A673 (cell line): ENCODE measurements at regions of chr19 and their contacts with region 1.

Region 1: DNA sequence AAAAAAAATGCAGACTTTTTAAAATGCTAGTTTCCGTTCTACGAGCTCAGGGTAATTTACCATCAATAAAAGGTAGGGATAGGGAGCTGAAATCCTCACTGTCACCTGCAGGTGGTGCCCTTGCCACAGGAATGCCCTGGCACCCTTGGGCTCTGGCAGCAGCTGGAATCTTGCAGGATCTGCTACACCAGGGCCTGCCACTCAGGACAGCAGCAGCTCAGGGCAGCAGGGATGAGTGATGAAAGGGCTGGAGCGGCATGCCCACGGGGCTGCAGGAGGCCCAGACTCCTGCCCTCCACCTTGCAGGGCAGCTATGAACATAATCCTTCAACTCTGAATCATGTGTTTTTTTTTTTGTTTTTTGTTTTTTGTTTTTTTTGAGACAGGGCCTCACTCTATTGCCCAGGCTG is 54.0 kb downstream of the GNG7 start:
- DNase-seq: peak; percentile 85
- H3K4me3 ChIP-seq: no peak overlapping the region
- H3K27ac ChIP-seq: no peak overlapping the region
- H3K4me1 ChIP-seq: no peaks in the 10 kb centered on the region
- H3K27me3 ChIP-seq: peaks cover 3% of the 10 kb centered on the region
- CTCF ChIP-seq: peak; percentile 89

Region 2: GRCh38 chr19:2337329-2338043 is 311.0 kb before region 1 on chr19:
- CTCF ChIA-PET with region 1: no interaction called
- POLR2A ChIA-PET with region 1: no interaction called
- intact Hi-C with region 1: no loop called
- DNase-seq: no peak
- H3K4me3 ChIP-seq: no peak overlapping the region
- H3K27ac ChIP-seq: no peak overlapping the region
- H3K4me1 ChIP-seq: peaks cover under 1% of the 10 kb centered on the region
- H3K27me3 ChIP-seq: no peaks in the 10 kb centered on the region
- CTCF ChIP-seq: no peak

Region 3: DNA sequence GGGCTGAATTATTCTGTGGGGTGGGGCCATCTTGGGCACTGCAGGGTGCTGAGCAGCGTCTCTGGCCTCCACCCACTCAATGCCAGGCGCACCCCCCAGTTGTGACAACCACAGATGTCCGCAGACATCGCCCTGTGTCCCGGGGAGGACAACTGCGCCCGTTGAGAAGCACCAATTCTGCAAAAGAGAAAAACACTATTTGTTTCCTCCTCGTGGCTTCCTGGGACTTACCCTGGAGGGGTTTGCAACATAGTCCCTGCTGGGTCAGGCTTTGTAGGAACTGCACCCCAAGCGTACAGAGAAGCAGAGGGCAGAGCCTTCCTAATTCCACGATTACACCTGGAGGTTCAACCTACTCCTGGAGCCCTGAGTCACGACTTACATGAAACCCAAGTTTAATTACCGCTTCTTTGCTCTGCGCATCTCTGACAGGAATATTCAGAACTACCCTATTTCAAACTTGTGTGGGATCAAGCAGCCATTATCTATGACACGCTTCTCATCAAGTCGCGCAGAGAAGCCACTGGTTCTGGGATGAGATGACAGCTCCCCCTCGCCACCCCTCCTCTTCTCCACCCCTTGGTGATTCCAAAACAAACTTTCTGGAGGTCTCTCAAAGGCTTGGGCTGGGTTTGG is 102.4 kb after region 1 on chr19:
- CTCF ChIA-PET with region 1: interaction called, 12 read pairs
- POLR2A ChIA-PET with region 1: no interaction called
- intact Hi-C with region 1: loop called (anchors 1 kb)
- DNase-seq: no peak
- H3K4me3 ChIP-seq: no peak overlapping the region
- H3K27ac ChIP-seq: no peak overlapping the region
- H3K4me1 ChIP-seq: no peaks in the 10 kb centered on the region
- H3K27me3 ChIP-seq: peaks cover under 1% of the 10 kb centered on the region
- CTCF ChIP-seq: no peak

Region 4: GRCh38 chr19:2834215-2834871 is 185.8 kb after region 1 on chr19:
- CTCF ChIA-PET with region 1: no interaction called
- POLR2A ChIA-PET with region 1: no interaction called
- intact Hi-C with region 1: no loop called
- DNase-seq: no peak
- H3K4me3 ChIP-seq: no peak overlapping the region
- H3K27ac ChIP-seq: no peak overlapping the region
- H3K4me1 ChIP-seq: no peaks in the 10 kb centered on the region
- H3K27me3 ChIP-seq: no peaks in the 10 kb centered on the region
- CTCF ChIP-seq: no peak

Region 5: DNA sequence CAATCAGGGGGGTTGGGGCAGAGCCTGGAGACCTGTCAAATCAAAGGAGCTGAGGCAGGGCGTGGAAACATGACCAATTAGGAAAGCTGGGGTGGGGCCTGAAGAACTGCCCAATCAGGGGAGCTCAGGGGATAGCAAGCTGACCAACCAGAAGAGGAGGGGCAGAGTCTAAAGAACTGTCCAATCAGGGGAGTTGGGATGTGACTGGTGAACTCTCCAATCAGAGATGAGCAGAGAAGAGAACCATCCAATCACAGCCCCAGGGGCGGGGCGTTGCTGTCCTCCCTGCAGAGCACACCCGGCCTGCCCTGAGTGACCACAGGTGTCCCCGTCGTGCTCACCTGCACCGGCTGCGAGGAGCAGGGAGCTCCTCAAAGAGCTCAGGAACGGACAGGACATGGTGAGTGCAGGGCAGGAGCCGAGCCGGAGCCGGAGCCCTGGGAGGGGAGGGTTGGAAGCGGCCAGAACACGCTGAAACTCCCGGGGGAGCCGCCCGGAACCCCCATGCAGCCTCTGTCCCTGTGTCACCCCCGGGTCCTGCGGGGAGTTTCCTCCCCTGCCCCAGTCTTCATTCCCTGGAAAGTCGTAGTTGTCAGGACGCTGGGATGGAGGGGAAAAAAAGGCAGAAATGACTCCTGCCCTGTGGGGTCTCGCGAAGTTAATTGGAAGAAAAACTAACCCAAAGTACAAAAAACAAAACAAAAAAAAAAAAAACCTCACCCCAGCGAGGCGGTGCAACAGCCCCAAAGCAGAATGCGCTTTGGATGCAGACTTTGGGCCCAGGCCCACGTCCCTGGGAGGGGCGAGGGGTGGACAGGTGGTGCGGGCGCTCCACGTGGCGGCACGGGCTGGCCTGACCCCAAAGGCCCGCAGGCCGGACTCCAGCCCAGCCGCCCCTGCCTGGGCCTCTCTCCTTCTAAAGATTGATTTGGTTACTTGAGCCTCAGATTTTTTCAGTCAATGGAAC is 218.8 kb after region 1 on chr19 and contains the start of gene ZNF556:
- CTCF ChIA-PET with region 1: interaction called, 7 read pairs
- POLR2A ChIA-PET with region 1: no interaction called
- intact Hi-C with region 1: loop called (anchors 2 kb)
- DNase-seq: peak; percentile 33
- H3K4me3 ChIP-seq: no peak within 1 kb of the TSS
- H3K27ac ChIP-seq: no peak within 1 kb of the TSS
- H3K4me1 ChIP-seq: no peaks in the 10 kb centered on the region
- H3K27me3 ChIP-seq: no peaks in the 10 kb centered on the region
- CTCF ChIP-seq: no peak
- total RNA-seq, gene ZNF556: not detected in 2 replicates